ENCODE measurements at regions of chr17 and their contacts with region 1.

Region 1: GRCh38 chr17:8470447-8471047 is 34.9 kb downstream of the NDEL1 start:
- DNase-seq: peak; percentile 61 to 85 (median 83)
- ATAC-seq: peak; percentile 36 to 68 (median 49)
- H3K4me3 ChIP-seq: no peak overlapping the region
- H3K27ac ChIP-seq: peak overlapping the region in 2 of 3 donors; percentile 39 to 80
- H3K4me1 ChIP-seq: peaks cover 0 to 12% (median 5%) of the 10 kb centered on the region in 4 donors
- H3K27me3 ChIP-seq: no peaks in the 10 kb centered on the region
- CTCF ChIP-seq: no peak
- POLR2A ChIP-seq: no peak

Region 2: GRCh38 chr17:8409966-8410864 is 60.3 kb before region 1 on chr17:
- intact Hi-C with region 1: loop called in 1 of 2 experiments (anchors 10 kb)
- DNase-seq: peak; percentile 88 to 92 (median 90)
- ATAC-seq: peak; percentile 95 to 98 (median 97)
- H3K4me3 ChIP-seq: no peak overlapping the region
- H3K27ac ChIP-seq: no peak overlapping the region
- H3K4me1 ChIP-seq: peaks cover 0 to 15% (median 0%) of the 10 kb centered on the region in 4 donors
- H3K27me3 ChIP-seq: no peaks in the 10 kb centered on the region
- CTCF ChIP-seq: peak; percentile 86 to 92 (median 88)
- POLR2A ChIP-seq: no peak

Measured in right lobe of liver (tissue), 6 donors.